ENCODE measurements at regions of chr1 and their contacts with region 1.

Region 1: DNA sequence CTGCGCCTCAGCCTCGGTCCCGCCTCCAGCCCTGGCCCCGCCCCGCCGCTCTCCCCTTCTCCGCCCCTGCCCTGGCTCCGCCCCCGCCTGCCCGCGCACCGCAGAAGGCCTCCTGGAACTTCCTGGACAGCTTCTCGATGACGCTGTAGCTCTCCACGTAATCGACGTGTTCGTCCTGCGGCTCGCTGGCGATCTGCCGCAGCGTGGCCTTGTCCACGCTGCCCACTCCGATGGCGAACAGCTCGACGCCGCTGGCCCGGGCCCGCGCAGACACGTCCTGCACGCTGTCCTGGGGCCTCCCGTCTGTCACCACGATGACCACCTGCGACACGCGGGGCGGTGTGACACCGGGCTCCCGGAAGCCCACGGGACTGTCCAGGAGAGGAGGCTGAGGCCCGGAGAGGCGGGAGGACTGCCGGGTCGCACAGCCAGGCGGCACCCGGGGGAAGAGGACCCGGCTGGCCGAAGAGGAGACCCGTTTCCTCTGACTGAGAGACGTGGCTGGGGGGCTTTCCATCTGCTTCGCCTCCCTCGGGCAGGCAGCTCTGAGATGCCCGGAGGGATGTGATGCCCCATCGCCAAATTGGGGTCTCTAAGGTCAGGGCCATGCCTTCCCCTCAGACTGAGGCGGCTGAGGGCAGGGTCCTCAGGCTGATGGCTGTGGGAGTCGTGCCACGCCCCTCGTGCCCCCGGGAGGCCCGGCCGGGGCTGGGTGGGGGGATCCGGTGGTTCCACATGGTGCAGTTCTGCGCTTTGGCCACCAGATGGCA is 4.6 kb downstream of the MATN1 start:
- DNase-seq: peak; percentile 99
- H3K4me3 Mint-ChIP-seq: peak overlapping the region; percentile 96
- H3K27ac Mint-ChIP-seq: peak overlapping the region; percentile 96
- H3K4me1 Mint-ChIP-seq: peaks cover 14% of the 10 kb centered on the region
- H3K27me3 Mint-ChIP-seq: no peaks in the 10 kb centered on the region

Region 2: GRCh38 chr1:30707412-30708360 is 11.1 kb before region 1 on chr1:
- intact Hi-C with region 1: no loop called
- DNase-seq: peak; percentile 86
- H3K4me3 Mint-ChIP-seq: no peak overlapping the region
- H3K27ac Mint-ChIP-seq: no peak overlapping the region
- H3K4me1 Mint-ChIP-seq: no peaks in the 10 kb centered on the region
- H3K27me3 Mint-ChIP-seq: peaks cover 14% of the 10 kb centered on the region

Region 3: GRCh38 chr1:30743584-30744059 is 24.8 kb after region 1 on chr1:
- intact Hi-C with region 1: loop called (anchors 1 kb)
- DNase-seq: peak; percentile 92
- H3K4me3 Mint-ChIP-seq: peak overlapping the region; percentile 89
- H3K27ac Mint-ChIP-seq: peak overlapping the region; percentile 99
- H3K4me1 Mint-ChIP-seq: peaks cover 91% of the 10 kb centered on the region
- H3K27me3 Mint-ChIP-seq: no peaks in the 10 kb centered on the region

Region 4: GRCh38 chr1:30756545-30757195 is 37.8 kb after region 1 on chr1:
- intact Hi-C with region 1: loop called (anchors 1 kb)
- DNase-seq: peak; percentile 90
- H3K4me3 Mint-ChIP-seq: peak overlapping the region; percentile 100
- H3K27ac Mint-ChIP-seq: peak overlapping the region; percentile 97
- H3K4me1 Mint-ChIP-seq: peaks cover 82% of the 10 kb centered on the region
- H3K27me3 Mint-ChIP-seq: no peaks in the 10 kb centered on the region

Region 5: GRCh38 chr1:30779294-30780071 is 60.7 kb after region 1 on chr1:
- intact Hi-C with region 1: loop called (anchors 1 kb)
- DNase-seq: peak; percentile 97
- H3K4me3 Mint-ChIP-seq: no peak overlapping the region
- H3K27ac Mint-ChIP-seq: no peak overlapping the region
- H3K4me1 Mint-ChIP-seq: peaks cover 11% of the 10 kb centered on the region
- H3K27me3 Mint-ChIP-seq: peaks cover 4% of the 10 kb centered on the region

Region 6: GRCh38 chr1:30911046-30911954 is 192.5 kb after region 1 on chr1:
- intact Hi-C with region 1: loop called (anchors 5 kb)
- DNase-seq: peak; percentile 86
- H3K4me3 Mint-ChIP-seq: no peak overlapping the region
- H3K27ac Mint-ChIP-seq: no peak overlapping the region
- H3K4me1 Mint-ChIP-seq: peaks cover 11% of the 10 kb centered on the region
- H3K27me3 Mint-ChIP-seq: peaks cover 34% of the 10 kb centered on the region

Region 7: DNA sequence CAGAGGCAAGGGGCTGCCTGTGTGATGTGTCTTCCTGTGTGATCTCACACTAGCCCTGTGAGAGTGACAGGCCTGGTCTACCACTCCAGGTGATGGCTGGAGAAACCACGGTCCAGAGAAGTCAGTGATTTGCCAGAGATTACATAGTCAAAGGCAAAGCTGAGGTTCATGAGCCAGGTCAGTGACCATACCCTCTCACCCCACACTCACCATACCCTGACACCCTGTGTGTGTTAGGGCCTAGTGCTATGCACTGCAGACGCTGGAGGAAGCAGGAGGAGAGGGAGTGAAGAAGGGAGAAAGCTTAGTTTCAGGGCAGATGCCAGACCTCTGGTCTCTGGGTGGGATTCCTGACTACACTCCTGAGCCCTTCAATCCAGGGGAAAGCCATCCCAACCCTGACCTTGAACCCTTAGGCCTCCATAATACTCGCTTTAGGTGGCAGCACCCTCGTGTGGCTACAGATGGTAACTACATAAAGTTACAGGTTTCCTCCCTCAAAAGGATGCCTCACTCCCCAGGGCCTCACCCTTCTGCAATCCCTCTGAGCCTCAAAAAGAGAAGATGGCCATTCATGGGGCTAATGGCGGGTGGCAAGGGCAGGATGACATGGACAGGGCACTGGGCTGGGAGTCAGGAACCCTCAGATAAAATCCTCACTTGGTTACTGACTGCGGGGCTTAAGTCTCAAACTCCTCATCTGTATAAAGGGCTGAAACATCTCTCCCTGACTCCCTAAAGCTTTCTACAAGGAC is 210.5 kb after region 1 on chr1:
- intact Hi-C with region 1: loop called (anchors 1 kb)
- DNase-seq: peak; percentile 87
- H3K4me3 Mint-ChIP-seq: no peak overlapping the region
- H3K27ac Mint-ChIP-seq: no peak overlapping the region
- H3K4me1 Mint-ChIP-seq: no peaks in the 10 kb centered on the region
- H3K27me3 Mint-ChIP-seq: peaks cover 2% of the 10 kb centered on the region

Region 8: DNA sequence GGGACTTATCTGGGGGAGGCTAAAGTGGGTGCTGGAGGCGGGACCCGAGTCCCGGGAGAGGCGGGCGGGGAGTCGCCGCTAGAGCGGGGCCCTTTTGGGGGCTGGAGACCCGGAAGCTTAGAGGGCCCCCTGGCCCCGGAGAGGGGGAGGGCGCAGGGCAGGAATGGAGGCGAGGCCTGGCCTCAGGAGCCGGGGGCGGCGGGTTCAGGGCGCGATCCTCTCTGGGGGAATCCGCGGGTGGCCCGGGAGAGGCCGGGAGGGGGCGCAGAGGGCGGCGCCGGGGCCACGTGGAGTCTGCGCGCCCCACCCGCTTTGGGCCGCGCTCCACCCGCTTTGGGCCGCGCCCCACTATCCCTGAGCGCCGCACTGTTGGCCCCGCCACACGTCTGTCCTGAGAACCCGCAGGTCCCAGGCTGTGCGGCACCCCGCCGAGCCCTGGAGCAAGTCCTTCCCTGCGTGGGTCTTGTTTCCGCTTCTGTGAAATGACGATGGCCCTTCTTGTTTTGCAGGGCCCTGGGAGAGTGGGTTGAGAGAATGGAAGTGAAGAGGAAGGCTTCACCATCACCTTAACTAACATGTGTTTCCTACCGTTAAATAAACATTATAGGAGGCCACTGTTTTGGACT is 436.5 kb after region 1 on chr1:
- intact Hi-C with region 1: loop called (anchors 10 kb)
- DNase-seq: peak; percentile 91
- H3K4me3 Mint-ChIP-seq: peak overlapping the region; percentile 96
- H3K27ac Mint-ChIP-seq: peak overlapping the region; percentile 84
- H3K4me1 Mint-ChIP-seq: peaks cover 6% of the 10 kb centered on the region
- H3K27me3 Mint-ChIP-seq: peaks cover 4% of the 10 kb centered on the region